ENCODE measurements at regions of chr2 and their contacts with region 1.

Region 1: DNA sequence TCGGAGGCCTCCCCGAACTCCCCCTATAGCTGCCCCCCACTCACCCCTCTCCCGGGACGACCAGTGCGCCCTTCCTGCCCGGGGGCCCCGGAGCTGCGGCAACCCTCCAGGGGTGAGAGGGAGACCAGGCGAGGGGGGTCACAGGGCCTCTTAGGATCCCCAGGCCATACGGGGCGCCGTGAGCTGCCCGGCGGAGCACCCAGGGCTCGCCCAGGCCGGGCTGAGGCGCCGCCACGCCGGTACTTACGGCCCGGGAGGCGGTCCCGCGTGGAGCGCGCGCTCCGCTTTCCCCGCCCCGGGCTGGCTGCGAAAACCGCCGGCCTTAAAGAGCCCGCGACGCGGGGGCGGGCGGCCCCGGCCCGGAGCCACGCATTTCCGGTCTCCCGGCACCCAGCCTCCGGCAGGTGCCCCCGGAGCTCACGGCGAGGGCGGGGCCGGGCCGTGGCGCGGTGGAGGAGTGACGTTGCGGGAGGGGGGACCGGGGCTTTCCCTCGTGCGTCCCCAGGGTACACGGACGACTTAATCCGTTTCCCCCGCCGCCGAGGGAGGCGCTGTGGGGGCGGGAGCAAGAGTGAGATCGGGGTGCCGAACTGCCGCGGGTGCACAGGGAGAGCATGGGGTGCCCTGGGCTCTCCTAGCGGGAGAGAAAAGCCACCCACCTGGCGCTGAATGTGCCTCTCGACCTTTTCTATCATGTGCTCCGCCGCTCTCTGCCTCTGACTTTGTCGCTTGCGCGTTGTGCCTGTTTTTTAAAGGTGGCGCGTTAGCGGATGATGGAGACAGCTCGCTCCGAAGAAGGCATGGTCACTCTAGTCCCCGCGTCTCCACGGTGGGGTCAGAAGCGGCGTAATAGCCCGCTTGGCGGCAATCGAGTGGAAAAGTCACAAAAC is at the start of gene METTL21A:
- DNase-seq: peak; percentile 93
- H3K4me3 Mint-ChIP-seq: peak within 1 kb of the TSS; percentile 89
- H3K27ac Mint-ChIP-seq: peak within 1 kb of the TSS; percentile 95
- H3K4me1 Mint-ChIP-seq: peaks cover 40% of the 10 kb centered on the region
- H3K27me3 Mint-ChIP-seq: no peaks in the 10 kb centered on the region
- total RNA-seq, gene METTL21A: 33.2 and 36.1 TPM in 2 replicates

Region 2: GRCh38 chr2:206159346-206160124 is 1465.7 kb before region 1 on chr2 and contains the starts of genes EEF1B2 and NDUFS1:
- intact Hi-C with region 1: loop called (anchors 2 kb)
- DNase-seq: peak; percentile 97
- H3K4me3 Mint-ChIP-seq: peak within 1 kb of the TSS; percentile 99
- H3K27ac Mint-ChIP-seq: peak within 1 kb of the TSS; percentile 99
- H3K4me1 Mint-ChIP-seq: peaks cover 52% of the 10 kb centered on the region
- H3K27me3 Mint-ChIP-seq: no peaks in the 10 kb centered on the region
- total RNA-seq, gene EEF1B2: 698 and 711 TPM in 2 replicates
- total RNA-seq, gene NDUFS1: 76.6 and 78.0 TPM in 2 replicates

Region 3: GRCh38 chr2:206765242-206766056 is 859.8 kb before region 1 on chr2 and contains the starts of genes FASTKD2 and MDH1B:
- intact Hi-C with region 1: loop called (anchors 1 kb)
- DNase-seq: peak; percentile 80
- H3K4me3 Mint-ChIP-seq: peak within 1 kb of the TSS; percentile 97
- H3K27ac Mint-ChIP-seq: peak within 1 kb of the TSS; percentile 98
- H3K4me1 Mint-ChIP-seq: peaks cover 30% of the 10 kb centered on the region
- H3K27me3 Mint-ChIP-seq: peaks cover 4% of the 10 kb centered on the region
- total RNA-seq, gene FASTKD2: 32.8 and 36.7 TPM in 2 replicates
- total RNA-seq, gene MDH1B: 0.20 and 0.36 TPM in 2 replicates

Region 4: DNA sequence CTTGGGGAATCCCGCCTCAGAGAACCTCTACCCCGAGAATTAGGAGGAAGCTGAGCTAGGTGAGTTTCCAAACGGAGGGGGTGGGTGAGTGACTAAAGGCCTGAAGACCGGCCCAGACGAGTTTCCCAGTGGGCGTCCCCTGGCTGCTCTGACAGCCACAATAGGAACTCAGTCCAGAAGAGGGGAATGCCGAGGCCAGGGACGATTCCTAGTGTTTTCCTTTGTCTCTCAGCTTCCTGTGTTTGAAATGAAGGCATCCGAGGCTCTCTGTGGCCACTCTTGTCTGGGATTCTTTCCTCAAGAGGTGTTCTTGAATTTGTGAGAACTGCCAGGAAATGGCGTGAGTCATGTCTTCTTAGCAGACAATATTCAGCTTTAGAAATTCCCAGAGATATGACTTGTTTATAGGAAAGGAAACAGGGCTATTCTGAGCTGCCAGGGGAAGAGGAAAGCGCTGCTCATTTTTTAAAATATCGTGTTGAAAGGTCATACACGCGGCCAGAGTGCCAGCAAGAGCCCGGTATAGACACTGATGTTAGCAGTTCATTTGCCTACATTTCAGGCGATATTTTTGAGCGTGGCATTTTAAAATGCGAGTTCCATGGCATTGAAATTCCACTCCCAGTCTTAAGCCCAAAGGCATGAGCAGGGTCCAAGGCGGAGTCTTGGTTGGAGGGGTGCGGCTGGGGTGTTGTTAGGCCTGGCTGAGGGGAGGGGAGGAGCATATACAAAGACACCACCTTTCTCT is 290.5 kb before region 1 on chr2:
- intact Hi-C with region 1: loop called (anchors 10 kb)
- DNase-seq: no peak
- H3K4me3 Mint-ChIP-seq: peak overlapping the region; percentile 28
- H3K27ac Mint-ChIP-seq: peak overlapping the region; percentile 88
- H3K4me1 Mint-ChIP-seq: peaks cover 82% of the 10 kb centered on the region
- H3K27me3 Mint-ChIP-seq: no peaks in the 10 kb centered on the region

Region 5: DNA sequence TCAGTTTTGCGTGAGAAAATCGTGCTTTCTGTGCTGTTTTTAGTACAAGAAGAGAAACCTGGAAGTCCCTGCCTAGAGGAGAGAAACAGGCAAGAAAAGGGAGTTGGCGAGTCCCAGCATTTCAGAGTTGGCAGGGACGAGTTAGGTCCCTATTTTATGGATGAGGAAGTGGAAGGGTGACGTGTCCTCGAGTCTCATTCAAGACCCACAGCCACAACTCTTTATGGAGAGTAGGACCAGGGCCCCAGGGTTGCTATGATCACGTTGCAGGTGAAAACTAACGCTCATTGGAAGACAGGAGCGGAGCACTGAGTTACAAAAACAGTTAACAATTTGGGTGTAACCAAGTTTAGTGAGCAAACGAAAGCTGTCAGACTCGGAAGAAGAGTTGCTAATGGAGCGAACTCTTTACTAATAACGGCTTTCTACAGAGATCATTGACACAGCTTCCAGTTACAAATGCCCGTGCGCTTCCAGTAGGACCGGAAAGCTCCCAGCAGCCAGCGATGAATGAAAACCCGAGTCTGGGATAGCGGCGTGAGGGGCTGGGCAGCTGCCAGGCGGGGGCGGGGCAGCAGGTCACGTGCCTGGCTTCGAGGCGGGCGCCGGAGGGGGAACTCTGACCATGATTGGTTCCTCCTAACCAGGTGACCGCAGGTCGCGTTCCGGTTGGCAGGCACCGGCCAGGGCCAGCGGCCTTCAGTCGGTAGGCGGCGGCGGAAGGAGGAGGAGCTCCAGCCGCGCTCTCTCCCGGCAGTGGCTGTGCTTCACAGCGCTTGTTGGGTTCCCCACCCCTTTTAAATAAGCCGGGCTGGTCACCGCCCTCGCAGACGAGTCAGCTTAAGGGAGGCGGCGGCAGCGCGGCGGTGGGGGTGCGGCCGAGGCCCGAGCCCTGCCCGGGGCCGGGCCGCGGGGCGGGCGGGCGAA is 85.8 kb after region 1 on chr2 and contains the start of gene CCNYL1:
- intact Hi-C with region 1: loop called (anchors 1 kb)
- DNase-seq: peak; percentile 98
- H3K4me3 Mint-ChIP-seq: peak within 1 kb of the TSS; percentile 96
- H3K27ac Mint-ChIP-seq: peak within 1 kb of the TSS; percentile 76
- H3K4me1 Mint-ChIP-seq: peaks cover 36% of the 10 kb centered on the region
- H3K27me3 Mint-ChIP-seq: no peaks in the 10 kb centered on the region
- total RNA-seq, gene CCNYL1: 6.8 and 8.7 TPM in 2 replicates

Region 6: DNA sequence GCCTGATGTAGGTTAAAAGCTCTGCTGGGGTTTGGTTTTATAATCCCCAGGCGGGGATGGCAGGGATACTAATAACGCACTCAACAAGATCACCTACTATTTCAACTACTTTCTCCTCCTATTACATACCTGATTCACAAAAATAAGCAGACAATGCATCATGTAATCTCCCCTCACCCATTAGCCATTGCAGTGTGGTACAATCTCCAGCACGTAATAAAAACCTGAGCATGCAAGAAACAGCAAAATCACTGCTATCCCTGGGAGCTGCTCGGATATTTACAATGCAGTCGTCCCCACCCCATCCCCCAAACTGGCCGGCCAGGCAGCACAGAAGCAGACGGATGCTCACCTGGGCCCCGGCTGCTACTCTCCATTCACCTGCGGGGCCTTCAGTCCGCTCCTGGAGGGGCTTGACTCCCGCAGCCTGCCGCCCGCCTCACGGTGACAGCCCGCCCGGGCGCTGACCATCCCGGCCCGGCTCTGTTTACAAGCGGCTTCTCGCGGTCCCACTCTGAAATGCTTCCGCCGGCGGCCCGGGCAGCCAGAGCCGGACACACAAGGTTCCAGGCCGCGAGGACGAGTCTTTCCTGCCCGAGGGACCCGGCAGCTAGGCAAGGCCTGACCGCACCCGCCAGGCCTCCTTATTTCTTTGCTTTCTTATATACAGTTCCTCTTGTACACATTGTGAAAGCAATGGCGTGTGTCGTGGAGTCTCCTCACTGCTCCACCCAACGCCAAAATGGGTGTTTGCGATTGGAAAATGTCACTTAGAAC is 400.0 kb after region 1 on chr2 and contains the start of gene PLEKHM3:
- intact Hi-C with region 1: loop called (anchors 1 kb)
- DNase-seq: peak; percentile 73
- H3K4me3 Mint-ChIP-seq: peak within 1 kb of the TSS; percentile 95
- H3K27ac Mint-ChIP-seq: peak within 1 kb of the TSS; percentile 79
- H3K4me1 Mint-ChIP-seq: peaks cover 17% of the 10 kb centered on the region
- H3K27me3 Mint-ChIP-seq: no peaks in the 10 kb centered on the region
- total RNA-seq, gene PLEKHM3: 6.4 and 7.3 TPM in 2 replicates

Region 7: GRCh38 chr2:208265801-208266552 is 640.7 kb after region 1 on chr2 and contains the start of gene PIKFYVE:
- intact Hi-C with region 1: loop called (anchors 1 kb)
- DNase-seq: peak; percentile 88
- H3K4me3 Mint-ChIP-seq: peak within 1 kb of the TSS; percentile 89
- H3K27ac Mint-ChIP-seq: peak within 1 kb of the TSS; percentile 92
- H3K4me1 Mint-ChIP-seq: peaks cover 46% of the 10 kb centered on the region
- H3K27me3 Mint-ChIP-seq: no peaks in the 10 kb centered on the region
- total RNA-seq, gene PIKFYVE: 28.7 and 33.5 TPM in 2 replicates

Measured in activated T-helper 1 cell treated with anti-CD3 and anti-CD28 coated beads, Interleukin-12 subunit alpha, Interleukin-12 subunit beta, Interleukin-2, Interleukin-4 antibody, amounts not matched to agents 30 ng/mL and 10 ng/mL and 1 ng/mL, durations not matched to agents 14 hours and 24 hours and 36 hours (primary cell).